IMR-90 (cell line): ENCODE measurements at regions of chr20 and their contacts with region 1.

Region 1: GRCh38 chr20:34129518-34130162 is 17.6 kb upstream of the EIF2S2 start:
- DNase-seq: peak; percentile 73
- ATAC-seq: peak; percentile 99
- H3K4me3 ChIP-seq: no peak overlapping the region
- H3K27ac ChIP-seq: no peak overlapping the region
- H3K4me1 ChIP-seq: no peaks in the 10 kb centered on the region
- H3K27me3 ChIP-seq: no peaks in the 10 kb centered on the region
- CTCF ChIP-seq: peak; percentile 87
- POLR2A ChIP-seq: no peak
- RAD21 ChIP-seq: peak; percentile 92

Region 2: GRCh38 chr20:33666293-33667244 is 463.1 kb before region 1 on chr20 and contains the start of gene ACTL10:
- CTCF ChIA-PET with region 1: no interaction called
- POLR2A ChIA-PET with region 1: no interaction called
- dilution Hi-C with region 1: no loop called
- in situ Hi-C with region 1: no loop called
- intact Hi-C with region 1: loop called (anchors 1 kb)
- DNase-seq: peak; percentile 96
- ATAC-seq: peak; percentile 77
- H3K4me3 ChIP-seq: peak within 1 kb of the TSS; percentile 29
- H3K27ac ChIP-seq: peak within 1 kb of the TSS; percentile 63
- H3K4me1 ChIP-seq: peaks cover 19% of the 10 kb centered on the region
- H3K27me3 ChIP-seq: no peaks in the 10 kb centered on the region
- CTCF ChIP-seq: peak; percentile 53
- POLR2A ChIP-seq: no peak
- RAD21 ChIP-seq: peak; percentile 31
- total RNA-seq, gene ACTL10: 0.18 and 0.28 TPM in 2 replicates

Region 3: DNA sequence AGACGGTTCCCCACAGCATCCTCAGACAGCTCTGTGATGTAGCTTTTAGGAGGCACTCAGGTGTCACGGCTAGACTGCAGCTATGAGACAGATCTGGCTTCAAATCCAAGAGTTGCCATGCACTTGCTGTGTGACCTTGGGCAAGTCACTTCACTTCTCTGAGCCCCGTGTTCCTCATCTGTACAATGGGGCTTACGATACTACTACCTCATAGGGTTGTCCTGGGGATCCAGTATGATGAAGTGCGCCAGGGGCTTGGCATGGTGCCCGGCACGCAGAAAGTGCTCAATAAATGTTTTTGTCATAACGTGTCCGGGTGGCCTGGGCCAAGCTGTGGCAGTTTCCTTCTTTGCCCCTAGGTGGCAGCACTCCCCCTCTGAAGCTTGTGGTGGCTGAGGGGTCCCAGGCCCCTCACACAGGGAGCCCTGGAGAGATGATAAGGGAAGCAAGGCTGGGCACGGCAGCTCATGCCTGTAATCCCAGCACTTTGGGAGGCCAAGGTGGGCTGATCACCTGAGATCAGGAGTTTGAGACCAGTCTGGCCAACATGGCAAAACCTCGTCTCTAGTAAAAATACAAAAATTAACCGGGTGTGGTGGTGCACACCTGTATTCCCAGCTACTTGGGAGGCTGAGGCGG is 337.6 kb before region 1 on chr20:
- CTCF ChIA-PET with region 1: no interaction called
- POLR2A ChIA-PET with region 1: no interaction called
- dilution Hi-C with region 1: no loop called
- in situ Hi-C with region 1: no loop called
- intact Hi-C with region 1: loop called (anchors 1 kb)
- DNase-seq: peak; percentile 37
- ATAC-seq: peak; percentile 60
- H3K4me3 ChIP-seq: no peak overlapping the region
- H3K27ac ChIP-seq: no peak overlapping the region
- H3K4me1 ChIP-seq: peaks cover 10% of the 10 kb centered on the region
- H3K27me3 ChIP-seq: no peaks in the 10 kb centered on the region
- CTCF ChIP-seq: peak; percentile 66
- POLR2A ChIP-seq: no peak
- RAD21 ChIP-seq: peak; percentile 68

Region 4: DNA sequence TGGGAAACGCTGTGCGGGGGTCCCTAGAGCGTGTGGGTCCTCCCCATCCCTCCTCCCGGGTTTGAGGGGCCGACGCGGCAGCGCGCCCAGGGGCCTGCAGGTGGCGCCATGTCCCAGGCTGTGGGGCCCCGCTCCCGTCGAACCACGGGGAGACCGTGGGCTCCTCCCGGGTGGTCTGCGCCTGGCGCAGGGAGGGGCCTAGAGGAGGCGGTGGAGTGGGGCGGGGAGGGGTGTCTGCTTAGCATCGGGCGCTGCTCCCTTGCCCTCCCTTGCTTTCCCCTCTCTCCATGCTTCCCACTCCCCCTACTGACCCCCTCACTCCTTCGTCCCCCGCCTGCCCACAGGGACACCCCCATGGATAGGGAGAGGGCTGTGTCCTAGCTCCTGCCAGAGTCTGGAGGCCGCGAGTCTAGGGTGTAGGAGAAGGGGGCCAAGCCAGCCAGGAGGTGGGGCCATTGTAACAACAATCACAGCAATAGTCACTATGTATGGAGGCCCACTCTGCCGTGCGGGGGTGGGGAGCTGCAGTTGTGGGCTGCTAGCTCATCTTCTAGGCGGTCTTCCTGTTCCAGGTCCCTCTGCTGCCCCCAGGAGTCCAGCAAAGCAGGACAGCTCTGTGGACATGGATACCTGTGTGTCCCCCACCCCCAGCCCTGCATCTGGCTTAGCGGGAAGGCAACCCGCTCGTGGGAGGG is 266.8 kb before region 1 on chr20:
- CTCF ChIA-PET with region 1: interaction called, 5 read pairs
- POLR2A ChIA-PET with region 1: no interaction called
- dilution Hi-C with region 1: no loop called
- in situ Hi-C with region 1: loop called (anchors 10 kb)
- intact Hi-C with region 1: loop called (anchors 1 kb)
- DNase-seq: peak; percentile 78
- ATAC-seq: peak; percentile 94
- H3K4me3 ChIP-seq: no peak overlapping the region
- H3K27ac ChIP-seq: no peak overlapping the region
- H3K4me1 ChIP-seq: peaks cover 7% of the 10 kb centered on the region; the same call in 1 of the 2 replicates
- H3K27me3 ChIP-seq: no peaks in the 10 kb centered on the region
- CTCF ChIP-seq: peak; percentile 75
- POLR2A ChIP-seq: 0 out of 2 replicates have a peak, but pooled peaks have one; percentile 23
- RAD21 ChIP-seq: peak; percentile 89